HepG2 (cell line): ENCODE measurements at regions of chr5 and their contacts with region 1.

Region 1: GRCh38 chr5:886861-887321 is 5.7 kb downstream of the BRD9 start:
- DNase-seq: no peak
- ATAC-seq: no peak
- H3K4me3 ChIP-seq: no peak overlapping the region
- H3K27ac ChIP-seq: no peak overlapping the region
- H3K4me1 ChIP-seq: peaks cover 16% of the 10 kb centered on the region
- H3K27me3 ChIP-seq: no peaks in the 10 kb centered on the region
- CTCF ChIP-seq: no peak
- EP300 ChIP-seq: no peak
- POLR2A ChIP-seq: no peak
- RAD21 ChIP-seq: no peak

Region 2: DNA sequence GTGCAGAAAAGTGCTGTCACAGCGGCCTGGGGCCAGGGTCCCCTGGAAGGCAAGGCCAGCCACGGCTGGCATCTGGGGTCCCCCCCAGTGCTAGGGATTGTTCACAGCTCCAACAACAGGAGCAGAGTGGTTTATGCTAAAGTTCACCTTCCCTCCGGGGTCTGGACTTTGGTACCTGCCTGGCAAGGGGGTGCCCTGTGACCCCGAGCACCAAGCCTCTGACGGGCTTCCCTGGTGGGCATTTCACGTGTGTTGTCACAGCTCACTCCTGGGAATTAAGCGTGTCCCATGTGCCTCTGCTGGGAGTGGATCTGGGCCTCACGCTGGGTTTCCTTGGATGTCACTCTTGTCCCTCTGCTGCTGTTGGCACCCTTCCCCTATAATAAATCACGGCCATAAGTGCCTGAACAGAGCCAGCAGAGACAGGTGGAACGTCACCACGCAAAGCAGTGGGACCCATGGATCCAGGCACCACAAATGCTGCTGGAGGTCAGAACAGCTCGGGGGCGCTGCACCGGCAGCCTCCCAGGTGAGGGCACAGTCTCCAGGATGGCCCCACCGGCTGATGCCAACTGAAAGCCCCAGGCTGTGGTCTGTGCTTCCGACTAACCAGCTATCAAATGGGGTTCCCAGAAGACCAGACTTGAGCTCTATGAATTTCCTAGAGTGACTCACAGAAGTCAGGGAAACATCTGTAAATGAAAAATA is 18.3 kb before region 1 on chr5:
- CTCF ChIA-PET with region 1: no interaction called
- POLR2A ChIA-PET with region 1: no interaction called
- in situ Hi-C with region 1: no loop called
- intact Hi-C with region 1: loop called (anchors 1 kb)
- DNase-seq: no peak
- ATAC-seq: no peak
- H3K4me3 ChIP-seq: no peak overlapping the region
- H3K27ac ChIP-seq: no peak overlapping the region
- H3K4me1 ChIP-seq: peaks cover 13% of the 10 kb centered on the region
- H3K27me3 ChIP-seq: no peaks in the 10 kb centered on the region
- CTCF ChIP-seq: no peak
- EP300 ChIP-seq: no peak
- POLR2A ChIP-seq: no peak
- RAD21 ChIP-seq: no peak